ENCODE measurements at regions of chr7 and their contacts with region 1.

Region 1: GRCh38 chr7:66150471-66150870 is 35.8 kb downstream of the CRCP start:
- DNase-seq: peak in 1 of 2 donors; percentile 17
- ATAC-seq: no peak
- H3K4me3 ChIP-seq: no peak overlapping the region
- H3K4me3 Mint-ChIP-seq: no peak overlapping the region
- H3K27ac ChIP-seq: peak overlapping the region; percentile 42
- H3K27ac Mint-ChIP-seq: peak overlapping the region; percentile 95 to 96
- H3K4me1 ChIP-seq: peaks cover 36% of the 10 kb centered on the region
- H3K4me1 Mint-ChIP-seq: peaks cover 41 to 42% of the 10 kb centered on the region in 2 donors
- H3K27me3 ChIP-seq: no peaks in the 10 kb centered on the region
- H3K27me3 Mint-ChIP-seq: no peaks in the 10 kb centered on the region
- CTCF ChIP-seq: no peak

Region 2: DNA sequence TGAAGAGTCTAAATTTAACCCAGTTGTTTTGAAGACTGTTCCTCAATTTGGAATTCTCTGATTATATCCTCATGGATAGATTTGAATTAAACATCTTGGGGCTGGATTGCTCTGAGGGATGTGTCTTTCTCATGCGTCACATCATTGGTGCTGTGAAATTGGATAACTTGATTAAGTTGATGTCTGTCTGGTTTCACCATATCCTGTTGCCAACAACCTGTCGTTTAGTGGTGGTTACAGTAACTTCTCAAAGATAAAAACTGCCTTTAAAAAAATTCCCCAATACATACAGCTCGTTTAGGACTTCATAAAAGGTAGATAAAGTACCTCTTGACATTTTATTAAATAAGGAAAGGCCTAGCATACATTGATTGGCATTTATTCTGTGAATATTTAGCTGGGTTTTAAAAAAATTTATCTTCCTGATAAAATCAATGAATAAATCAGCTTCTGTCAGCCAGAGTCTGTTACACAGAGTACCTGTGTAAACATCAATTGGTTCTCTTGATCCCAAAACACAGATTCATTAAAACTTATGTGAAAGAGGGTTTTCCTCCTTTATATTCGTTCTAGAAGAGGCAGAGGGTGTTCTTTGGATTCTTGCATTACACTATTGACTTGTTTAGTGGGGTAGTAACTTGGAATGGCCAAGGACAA is 25.3 kb before region 1 on chr7:
- intact Hi-C with region 1: loop called (anchors 2 kb)
- DNase-seq: peak in 1 of 2 donors; percentile 14
- ATAC-seq: peak; percentile 48 to 51 (median 50)
- H3K4me3 ChIP-seq: no peak overlapping the region
- H3K4me3 Mint-ChIP-seq: peak overlapping the region; percentile 68
- H3K27ac ChIP-seq: peak overlapping the region; percentile 85
- H3K27ac Mint-ChIP-seq: peak overlapping the region; percentile 94 to 99
- H3K4me1 ChIP-seq: peaks cover 7% of the 10 kb centered on the region
- H3K4me1 Mint-ChIP-seq: peaks cover 37 to 41% of the 10 kb centered on the region in 2 donors
- H3K27me3 ChIP-seq: no peaks in the 10 kb centered on the region
- H3K27me3 Mint-ChIP-seq: no peaks in the 10 kb centered on the region
- CTCF ChIP-seq: no peak

Region 3: GRCh38 chr7:66204822-66205740 is 54.6 kb after region 1 on chr7 and contains the start of gene TPST1:
- intact Hi-C with region 1: no loop called
- DNase-seq: peak; percentile 88
- ATAC-seq: peak; percentile 88 to 92 (median 90)
- H3K4me3 ChIP-seq: peak within 1 kb of the TSS; percentile 59
- H3K4me3 Mint-ChIP-seq: peak within 1 kb of the TSS; percentile 96
- H3K27ac ChIP-seq: peak within 1 kb of the TSS; percentile 46
- H3K27ac Mint-ChIP-seq: peak within 1 kb of the TSS; percentile 84
- H3K4me1 ChIP-seq: peaks cover 16% of the 10 kb centered on the region
- H3K4me1 Mint-ChIP-seq: peaks cover 27% of the 10 kb centered on the region in 2 donors
- H3K27me3 ChIP-seq: peaks cover 2% of the 10 kb centered on the region
- H3K27me3 Mint-ChIP-seq: peaks cover 0 to 2% of the 10 kb centered on the region in 2 donors
- CTCF ChIP-seq: peak; percentile 55
- total RNA-seq, gene TPST1: 10.4 to 17.3 (median 14.3) TPM

Region 4: GRCh38 chr7:66493235-66494181 is 343.0 kb after region 1 on chr7:
- intact Hi-C with region 1: no loop called
- DNase-seq: peak; percentile 94 to 99
- ATAC-seq: peak; percentile 92 to 98 (median 93)
- H3K4me3 ChIP-seq: peak overlapping the region; percentile 71
- H3K4me3 Mint-ChIP-seq: peak overlapping the region; percentile 90
- H3K27ac ChIP-seq: peak overlapping the region; percentile 92
- H3K27ac Mint-ChIP-seq: peak overlapping the region; percentile 98
- H3K4me1 ChIP-seq: peaks cover 17% of the 10 kb centered on the region
- H3K4me1 Mint-ChIP-seq: peaks cover 9 to 16% of the 10 kb centered on the region in 2 donors
- H3K27me3 ChIP-seq: no peaks in the 10 kb centered on the region
- H3K27me3 Mint-ChIP-seq: no peaks in the 10 kb centered on the region
- CTCF ChIP-seq: peak; percentile 27

Measured in natural killer cell (primary cell).